ENCODE measurements at regions of chr12 and their contacts with region 1.

Region 1: DNA sequence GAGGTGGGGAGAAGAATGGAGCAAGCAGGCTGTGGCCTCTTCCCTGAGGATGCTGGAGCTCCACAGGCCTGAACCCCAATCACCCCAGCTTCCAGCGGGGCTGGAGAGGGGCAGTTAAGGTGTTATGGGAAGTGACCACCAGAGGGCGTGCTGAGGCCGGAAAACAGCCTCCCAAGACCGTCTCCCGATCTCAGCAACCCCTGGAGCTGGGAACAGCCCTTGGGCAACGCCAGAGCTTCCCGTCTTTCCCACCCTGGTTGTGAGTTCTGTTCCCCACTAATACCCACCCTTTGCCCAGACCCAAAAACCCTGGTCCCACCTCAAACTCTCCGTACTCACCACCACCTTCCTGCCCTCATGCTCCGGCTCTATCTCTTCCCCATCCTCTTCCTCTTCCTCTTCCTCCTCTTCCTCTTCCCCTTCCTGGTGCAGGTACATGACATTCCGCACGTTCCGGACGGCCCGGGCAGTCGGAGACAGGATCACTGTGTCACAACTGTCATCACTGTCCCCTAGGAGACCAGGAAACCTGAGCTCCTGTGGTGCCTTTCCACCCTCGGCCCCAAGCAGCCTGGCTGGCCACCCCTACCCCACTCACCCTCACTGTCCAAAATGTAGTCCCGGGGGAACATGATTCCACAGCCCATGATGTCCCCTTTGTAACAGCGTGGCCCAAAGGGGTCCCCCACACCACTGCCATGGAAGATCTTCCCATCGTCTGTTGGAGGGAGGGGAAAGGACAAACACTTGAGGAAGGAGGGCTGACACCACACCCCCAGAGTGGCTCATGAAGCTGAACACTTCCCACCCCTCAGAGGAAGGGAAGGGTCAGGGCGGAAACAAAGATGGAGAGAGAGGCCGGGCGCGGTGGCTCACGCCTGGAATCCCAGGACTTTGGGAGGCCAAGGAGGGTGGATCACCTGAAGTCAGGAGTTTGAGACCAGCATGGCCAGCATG is 12.9 kb downstream of the SPRYD3 start:
- DNase-seq: peak; percentile 77 to 91 (median 84)
- H3K4me3 ChIP-seq: no peak overlapping the region
- H3K27ac ChIP-seq: peak overlapping the region in 4 of 5 donors; percentile 49 to 88 (median 65)
- H3K4me1 ChIP-seq: peaks cover 18 to 59% of the 10 kb centered on the region in 2 donors
- H3K27me3 ChIP-seq: no peaks in the 10 kb centered on the region
- CTCF ChIP-seq: peak; percentile 82 to 95 (median 92)
- POLR2A ChIP-seq: no peak

Region 2: GRCh38 chr12:52847335-52848102 is 218.7 kb before region 1 on chr12:
- intact Hi-C with region 1: no loop called
- DNase-seq: no peak
- H3K4me3 ChIP-seq: no peak overlapping the region
- H3K27ac ChIP-seq: no peak overlapping the region
- H3K4me1 ChIP-seq: no peaks in the 10 kb centered on the region
- H3K27me3 ChIP-seq: no peaks in the 10 kb centered on the region
- CTCF ChIP-seq: no peak
- POLR2A ChIP-seq: no peak

Region 3: GRCh38 chr12:53005986-53006809 is 60.1 kb before region 1 on chr12 and contains the start of gene EIF4B:
- intact Hi-C with region 1: no loop called
- DNase-seq: peak; percentile 100
- H3K4me3 ChIP-seq: peak within 1 kb of the TSS; percentile 41 to 92 (median 64)
- H3K27ac ChIP-seq: peak within 1 kb of the TSS; percentile 74 to 97 (median 92)
- H3K4me1 ChIP-seq: peaks cover 35 to 54% of the 10 kb centered on the region in 2 donors
- H3K27me3 ChIP-seq: no peaks in the 10 kb centered on the region
- CTCF ChIP-seq: no peak
- POLR2A ChIP-seq: peak; percentile 61 to 83
- total RNA-seq, gene EIF4B: 324 to 800 (median 571) TPM

Region 4: DNA sequence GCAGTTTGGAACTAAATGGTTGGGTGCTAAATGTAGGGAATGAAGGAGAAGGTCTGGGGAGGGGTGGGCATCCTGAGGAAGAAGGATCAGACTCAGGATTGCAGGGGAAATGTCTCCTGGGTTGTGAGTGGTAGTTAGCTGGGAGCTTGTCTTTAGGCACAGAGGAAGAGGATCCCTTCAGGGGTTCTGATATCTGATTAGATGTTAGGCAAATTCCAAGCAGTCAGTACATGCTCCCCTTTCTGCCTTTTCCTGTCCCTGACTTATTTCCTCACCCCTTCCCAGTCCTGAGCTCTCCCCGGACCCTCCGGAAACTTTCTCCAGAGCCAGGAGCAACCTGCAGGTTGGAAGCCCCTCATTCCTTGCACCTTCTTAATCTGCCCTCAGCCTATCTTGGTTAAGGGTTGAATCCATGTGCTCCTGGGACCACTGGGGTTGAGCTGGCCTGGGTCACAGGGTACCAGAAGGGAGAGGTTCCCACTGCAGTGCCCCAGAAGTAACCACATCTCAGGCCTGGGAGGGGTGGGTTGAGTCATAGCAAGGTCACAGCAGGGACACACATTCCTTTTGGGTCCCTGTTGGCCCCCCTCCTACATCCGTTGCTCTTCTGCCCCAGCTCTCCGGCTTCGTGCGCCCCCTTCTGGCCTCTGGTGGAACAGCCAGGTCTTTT is 32.9 kb after region 1 on chr12:
- intact Hi-C with region 1: loop called (anchors 2 kb)
- DNase-seq: peak; percentile 87 to 96 (median 92)
- H3K4me3 ChIP-seq: peak overlapping the region in 1 of 4 donors; percentile 64
- H3K27ac ChIP-seq: peak overlapping the region in 4 of 5 donors; percentile 33 to 93 (median 66)
- H3K4me1 ChIP-seq: peaks cover 0 to 33% of the 10 kb centered on the region in 2 donors
- H3K27me3 ChIP-seq: no peaks in the 10 kb centered on the region
- CTCF ChIP-seq: peak; percentile 93 to 99 (median 98)
- POLR2A ChIP-seq: no peak

Region 5: GRCh38 chr12:53131844-53132243 is 65.6 kb after region 1 on chr12:
- intact Hi-C with region 1: no loop called
- DNase-seq: peak in 1 of 7 donors; percentile 0
- H3K4me3 ChIP-seq: no peak overlapping the region
- H3K27ac ChIP-seq: no peak overlapping the region
- H3K4me1 ChIP-seq: no peaks in the 10 kb centered on the region
- H3K27me3 ChIP-seq: no peaks in the 10 kb centered on the region
- CTCF ChIP-seq: no peak
- POLR2A ChIP-seq: no peak

Region 6: DNA sequence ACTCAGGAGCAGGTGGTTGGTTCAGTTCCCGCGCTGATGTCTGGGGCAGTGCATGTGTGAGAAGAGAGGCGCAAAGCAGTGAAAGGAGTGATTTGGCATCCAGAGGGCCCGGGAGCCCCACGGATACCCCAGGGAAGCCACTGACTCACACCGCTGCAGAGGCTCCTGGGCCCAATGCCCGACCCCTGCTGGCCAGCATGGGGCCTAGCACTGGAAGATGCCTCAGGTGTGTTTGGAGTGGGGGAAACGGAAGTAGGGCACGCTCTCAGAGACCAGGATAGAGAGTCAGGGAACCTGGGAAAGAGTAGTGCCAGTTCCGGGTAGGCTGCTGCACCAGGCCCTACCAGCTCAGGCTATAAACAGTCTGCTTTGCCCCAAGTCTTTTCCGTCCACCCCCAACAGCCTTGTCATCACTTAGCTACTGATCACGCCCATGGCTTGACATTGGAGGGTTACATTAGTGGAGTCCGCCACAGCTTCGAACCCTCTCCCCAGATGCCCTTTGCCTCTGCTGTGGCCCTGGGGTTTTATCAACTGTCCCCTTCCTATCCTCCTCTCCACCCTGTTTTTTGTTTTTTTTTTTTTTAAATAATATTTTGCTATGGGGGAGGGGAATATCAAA is 124.0 kb after region 1 on chr12:
- intact Hi-C with region 1: loop called (anchors 5 to 10 kb)
- DNase-seq: peak in 6 of 7 donors; percentile 70 to 77 (median 72)
- H3K4me3 ChIP-seq: no peak overlapping the region
- H3K27ac ChIP-seq: peak overlapping the region in 3 of 5 donors; percentile 13 to 40 (median 21)
- H3K4me1 ChIP-seq: peaks cover 7 to 13% of the 10 kb centered on the region in 2 donors
- H3K27me3 ChIP-seq: no peaks in the 10 kb centered on the region
- CTCF ChIP-seq: peak; percentile 51 to 80 (median 72)
- POLR2A ChIP-seq: no peak

Region 7: DNA sequence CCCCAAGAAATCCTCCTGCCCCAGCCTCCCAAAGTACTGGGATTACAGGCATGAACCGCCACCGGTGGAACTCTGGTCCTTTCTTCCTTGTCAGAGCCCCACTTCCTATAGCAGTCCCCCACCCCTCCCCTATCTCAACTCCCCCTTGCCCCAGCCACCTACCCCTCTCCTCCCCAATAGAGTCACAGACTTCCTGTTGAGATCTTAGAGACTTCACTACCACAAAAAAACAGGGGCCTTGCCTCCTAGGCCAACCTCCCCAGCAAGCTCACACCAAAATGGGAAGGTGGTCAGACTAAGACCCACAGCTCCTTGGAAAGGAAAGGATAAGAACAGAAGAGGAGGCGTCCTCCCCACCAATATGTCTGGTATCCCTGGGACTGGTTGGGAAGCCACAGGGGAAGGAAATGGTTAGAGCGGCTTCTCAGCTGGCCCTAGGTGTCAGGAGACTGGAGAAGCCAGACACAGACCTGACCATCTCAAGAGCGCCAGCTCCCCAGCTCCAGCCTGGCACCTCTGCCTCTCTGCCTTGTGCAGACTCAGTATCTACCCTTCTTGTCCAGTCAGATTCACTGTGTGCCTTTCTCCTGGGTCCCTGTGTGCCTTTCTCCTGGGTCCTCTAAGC is 132.3 kb after region 1 on chr12:
- intact Hi-C with region 1: loop called (anchors 5 to 10 kb)
- DNase-seq: no peak
- H3K4me3 ChIP-seq: no peak overlapping the region
- H3K27ac ChIP-seq: no peak overlapping the region
- H3K4me1 ChIP-seq: peaks cover 4 to 12% of the 10 kb centered on the region in 2 donors
- H3K27me3 ChIP-seq: no peaks in the 10 kb centered on the region
- CTCF ChIP-seq: no peak
- POLR2A ChIP-seq: no peak